Posterior vena cava (tissue), 2 donors: ENCODE measurements at regions of chr6 and their contacts with region 1.

Region 1: DNA sequence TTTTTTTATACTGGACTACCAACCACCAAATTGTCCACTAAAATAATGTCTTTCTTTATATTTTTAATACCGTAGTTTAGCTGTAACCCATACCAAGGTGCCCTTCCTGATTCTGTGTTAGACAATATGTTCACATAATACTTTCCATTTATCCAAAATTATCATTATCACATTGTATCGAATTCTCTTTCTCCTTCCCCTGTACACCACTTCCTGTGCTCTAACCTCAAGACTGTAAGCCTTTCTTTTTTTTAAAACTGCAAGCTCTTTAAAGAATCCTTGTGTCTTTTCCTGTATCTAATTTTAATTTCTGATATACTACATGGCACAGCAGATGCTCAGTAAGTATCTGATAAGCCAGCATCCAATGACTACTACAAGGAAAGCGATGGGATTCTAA is 917.5 kb downstream of the EYS start:
- DNase-seq: no peak

Region 2: DNA sequence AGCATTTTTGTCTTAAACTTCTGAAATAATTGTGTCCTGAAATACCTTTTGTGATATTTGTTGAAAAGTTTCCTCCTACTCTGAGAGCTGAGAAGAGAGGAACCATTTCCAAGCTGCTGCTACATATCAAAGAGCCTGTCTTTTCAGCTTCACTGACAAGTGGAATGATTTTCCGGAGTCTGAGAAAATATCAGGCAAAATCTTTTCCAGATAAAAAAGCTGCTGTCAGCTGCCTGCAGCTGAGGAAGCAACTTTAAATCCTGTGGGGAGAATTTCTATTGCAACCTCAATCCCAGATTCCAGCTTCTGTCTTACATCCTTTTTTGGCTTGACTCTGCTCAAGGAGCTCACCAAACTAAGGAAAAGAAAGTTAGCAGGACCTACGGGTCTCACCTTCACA is 249.6 kb before region 1 on chr6:
- intact Hi-C with region 1: no loop called
- DNase-seq: no peak

Region 3: GRCh38 chr6:64847396-64847795 is 57.9 kb after region 1 on chr6:
- intact Hi-C with region 1: loop called in 1 of 2 experiments (anchors 2 kb)
- DNase-seq: no peak